GM18951 (cell line): ENCODE measurements at regions of chr9 and their contacts with region 1.

Region 1: GRCh38 chr9:90870621-90871326 is 69.2 kb downstream of the SYK start:
- POLR2A ChIP-seq: no peak

Region 2: DNA sequence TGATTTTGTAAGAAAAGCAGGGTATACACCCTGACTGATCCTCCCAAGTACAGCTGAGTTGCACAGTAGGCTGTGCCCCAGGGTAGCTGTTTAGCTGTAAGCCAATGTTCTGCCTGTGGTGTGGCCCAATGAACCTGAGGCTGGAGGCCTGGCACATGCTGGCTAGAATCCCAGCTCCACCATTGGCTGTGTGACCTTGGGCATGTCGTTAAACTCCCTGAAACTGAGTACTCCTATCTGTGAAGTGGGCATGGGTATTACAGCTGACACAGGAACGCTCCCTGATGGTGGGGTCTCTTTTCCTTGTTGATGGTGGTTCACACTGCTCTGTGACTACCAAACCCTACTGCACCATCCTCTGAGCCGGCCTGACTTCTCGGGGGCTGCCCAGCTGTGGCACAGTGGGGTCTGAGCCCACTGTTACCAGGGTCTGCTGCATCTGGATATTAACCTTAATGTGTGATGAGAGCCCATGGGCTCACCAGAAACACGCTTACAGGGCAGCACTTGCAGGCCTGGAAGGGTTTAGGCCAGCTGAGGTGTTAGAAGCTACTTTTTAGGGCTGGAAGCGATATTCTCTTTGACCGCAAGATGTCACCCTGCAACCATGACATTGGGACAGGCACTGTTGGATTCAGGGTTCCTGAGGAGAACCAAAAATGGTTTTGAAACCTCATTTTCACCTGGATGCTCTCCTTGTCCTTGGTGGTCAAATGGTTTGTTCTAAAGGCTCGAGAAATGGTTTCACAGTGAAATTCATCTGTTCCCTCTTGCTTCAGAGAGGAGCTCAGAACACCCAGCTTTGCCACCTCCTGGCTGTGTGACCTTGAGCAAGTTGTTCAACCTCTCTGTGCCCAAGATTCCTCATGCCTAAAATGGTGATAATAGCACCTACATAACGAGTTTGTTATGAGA is 1272.8 kb before region 1 on chr9:
- in situ Hi-C with region 1: loop called (anchors 25 kb)
- POLR2A ChIP-seq: no peak

Region 3: DNA sequence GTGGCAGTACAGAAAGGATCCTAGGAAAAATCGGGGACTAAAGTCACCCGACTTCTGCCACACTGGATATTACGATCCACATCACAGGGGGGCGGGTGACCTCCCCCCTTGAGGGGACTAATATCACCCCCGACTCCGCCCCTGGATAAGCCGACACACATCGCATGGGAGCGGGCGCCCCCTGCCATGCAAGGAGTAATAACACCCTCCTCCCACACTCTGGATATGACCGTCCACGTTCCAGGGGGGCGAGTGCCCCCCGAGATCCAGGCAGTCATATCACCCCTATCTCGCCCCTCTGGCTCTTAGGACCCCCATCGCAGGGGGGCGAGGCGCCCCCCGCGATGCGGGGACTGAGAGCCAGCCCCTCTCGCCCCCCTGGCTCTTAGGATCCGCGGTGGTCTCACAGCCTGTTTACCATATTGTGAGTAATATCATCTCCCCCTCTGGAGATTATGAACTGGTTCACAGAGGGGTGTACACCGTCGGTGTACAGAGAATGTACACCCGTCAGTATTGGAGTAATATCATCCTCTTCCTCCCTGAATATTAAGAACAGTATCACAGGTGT is 651.1 kb before region 1 on chr9:
- in situ Hi-C with region 1: loop called (anchors 25 kb)
- POLR2A ChIP-seq: no peak

Region 4: DNA sequence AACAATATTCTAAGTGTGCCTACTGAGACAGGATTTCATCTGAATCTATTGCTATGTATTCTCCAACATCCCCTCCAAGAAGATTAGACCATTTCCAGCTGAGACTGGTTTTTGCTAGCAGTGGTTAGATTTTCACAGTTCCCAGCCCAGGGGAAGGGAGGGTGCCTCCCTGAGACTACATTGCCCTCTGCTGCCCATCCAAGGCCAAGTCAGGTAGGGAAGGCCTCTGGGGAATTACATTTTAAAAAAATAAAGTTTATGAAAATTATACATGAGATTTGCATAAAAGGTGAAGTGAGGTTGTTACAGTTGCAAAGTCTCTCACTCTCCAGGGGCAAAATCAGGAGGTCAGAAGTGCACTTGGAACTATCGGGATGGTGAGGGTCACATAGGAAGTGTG is 97.2 kb before region 1 on chr9:
- in situ Hi-C with region 1: loop called (anchors 5 kb)
- POLR2A ChIP-seq: no peak